ENCODE measurements at regions of chr13 and their contacts with region 1.

Region 1: DNA sequence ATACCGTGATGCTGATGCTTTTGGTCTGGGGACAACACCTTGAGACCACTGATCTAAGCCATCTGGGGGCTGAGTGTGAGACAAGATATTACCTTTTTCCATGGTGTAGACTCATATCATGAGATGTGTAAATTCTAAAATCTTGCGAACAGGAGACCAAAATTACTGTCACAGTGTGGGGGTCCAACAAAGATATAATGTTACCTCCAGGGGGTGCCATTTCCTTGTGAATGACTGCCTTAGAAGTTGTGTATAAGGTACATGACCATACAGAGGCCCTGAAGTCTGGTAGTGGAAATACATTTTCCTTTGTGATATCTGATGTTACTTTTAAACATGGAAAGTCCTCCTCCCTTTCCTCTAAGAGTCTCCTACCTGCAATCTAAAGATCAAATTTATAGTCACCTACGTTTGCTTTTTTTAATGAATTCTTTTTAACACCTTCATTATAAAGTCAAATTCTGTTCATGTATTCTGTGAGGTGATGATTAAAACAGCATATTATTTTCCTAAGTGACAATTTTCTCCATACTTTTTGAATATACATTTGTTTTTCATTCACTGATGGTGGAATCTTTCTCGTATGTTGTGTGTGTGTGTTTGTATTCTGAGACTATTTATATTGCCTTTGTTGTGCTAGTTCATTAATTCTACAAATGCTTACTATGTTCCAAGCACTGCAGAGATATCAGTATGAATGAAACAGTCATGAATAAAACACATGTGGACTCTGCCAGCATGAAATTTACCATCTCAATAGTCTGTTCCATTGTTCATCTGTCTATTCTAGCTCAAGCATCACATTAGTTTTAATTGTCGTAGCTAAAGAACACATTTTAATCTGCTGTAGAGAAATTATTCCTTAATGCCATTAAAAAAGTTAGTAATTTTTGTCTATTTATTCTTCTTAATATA is 113.7 kb downstream of the RFC3 start:
- DNase-seq: peak; percentile 46
- ATAC-seq: peak; percentile 96
- H3K4me3 ChIP-seq: no peak overlapping the region
- H3K27ac ChIP-seq: no peak overlapping the region
- H3K4me1 ChIP-seq: peaks cover 0 to 5% of the 10 kb centered on the region in 2 experiments; a peak in 1 of 4 replicates
- H3K27me3 ChIP-seq: no peaks in the 10 kb centered on the region
- CTCF ChIP-seq: peak; percentile 48 to 72 (median 49); a peak in 5 of 6 replicates
- POLR2A ChIP-seq: no peak
- RAD21 ChIP-seq: peak; percentile 81

Region 2: DNA sequence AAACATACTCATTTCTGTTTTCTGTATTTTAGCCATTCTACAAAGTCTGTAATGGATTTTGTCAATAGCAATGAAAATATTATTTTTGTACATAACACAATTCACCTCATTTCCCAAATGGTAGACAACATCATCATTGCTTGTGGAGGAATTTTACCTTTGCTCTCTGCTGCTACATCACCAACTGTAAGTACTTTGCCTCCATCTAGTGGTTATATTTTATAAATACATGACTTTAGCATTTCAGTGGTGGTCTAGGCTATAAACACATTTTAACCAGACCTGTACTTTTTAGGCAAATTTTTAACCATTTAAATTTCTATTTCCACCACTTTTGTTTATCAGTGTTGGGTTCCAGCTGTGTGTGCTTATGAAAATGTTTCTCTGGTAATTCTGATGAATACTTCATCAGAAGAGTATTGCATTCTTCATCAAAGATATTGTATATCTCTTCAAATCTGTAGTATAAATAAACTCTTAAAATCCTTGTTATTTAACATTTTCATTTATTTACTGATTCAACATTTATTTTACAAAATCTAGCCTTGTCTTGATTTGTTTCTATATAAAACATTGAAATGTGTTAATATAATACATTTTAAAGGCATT is 1232.8 kb after region 1 on chr13:
- CTCF ChIA-PET with region 1: interaction called, 5 read pairs
- POLR2A ChIA-PET with region 1: no interaction called
- RAD21 ChIA-PET with region 1: no interaction called
- intact Hi-C with region 1: loop called (anchors 2 kb)
- DNase-seq: peak; percentile 15
- ATAC-seq: peak; percentile 75
- H3K4me3 ChIP-seq: no peak overlapping the region
- H3K27ac ChIP-seq: no peak overlapping the region
- H3K4me1 ChIP-seq: no peaks in the 10 kb centered on the region
- H3K27me3 ChIP-seq: no peaks in the 10 kb centered on the region
- CTCF ChIP-seq: peak; percentile 31 to 71 (median 45); a peak in 4 of 6 replicates
- POLR2A ChIP-seq: no peak
- RAD21 ChIP-seq: peak; percentile 74